Vagina (tissue), 2 donors: ENCODE measurements at regions of chr6 and their contacts with region 1.

Region 1: DNA sequence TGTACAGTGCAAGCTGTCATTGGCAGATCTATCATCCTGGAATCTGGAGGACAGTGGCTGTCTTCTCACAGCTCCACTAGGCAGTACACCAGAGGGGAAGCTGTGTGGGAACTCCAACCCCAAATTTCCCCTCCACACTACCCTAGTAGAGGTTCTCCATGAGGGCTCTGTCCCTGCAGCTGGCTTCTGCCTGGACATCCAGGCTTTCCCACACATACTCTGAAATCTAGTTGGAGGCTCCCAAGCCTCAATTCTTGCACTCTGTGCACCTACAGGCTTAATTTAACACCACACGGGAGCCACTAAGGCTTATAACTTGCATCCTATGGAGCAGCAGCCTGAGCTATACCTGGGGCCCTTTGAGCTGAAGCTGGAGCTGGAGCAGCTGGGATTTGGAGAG is 43.0 kb upstream of the TRIM39 start:
- DNase-seq: no peak
- H3K4me3 ChIP-seq: no peak overlapping the region
- H3K27ac ChIP-seq: no peak overlapping the region
- H3K4me1 ChIP-seq: no peaks in the 10 kb centered on the region
- H3K27me3 ChIP-seq: no peaks in the 10 kb centered on the region
- CTCF ChIP-seq: no peak
- POLR2A ChIP-seq: no peak

Region 2: DNA sequence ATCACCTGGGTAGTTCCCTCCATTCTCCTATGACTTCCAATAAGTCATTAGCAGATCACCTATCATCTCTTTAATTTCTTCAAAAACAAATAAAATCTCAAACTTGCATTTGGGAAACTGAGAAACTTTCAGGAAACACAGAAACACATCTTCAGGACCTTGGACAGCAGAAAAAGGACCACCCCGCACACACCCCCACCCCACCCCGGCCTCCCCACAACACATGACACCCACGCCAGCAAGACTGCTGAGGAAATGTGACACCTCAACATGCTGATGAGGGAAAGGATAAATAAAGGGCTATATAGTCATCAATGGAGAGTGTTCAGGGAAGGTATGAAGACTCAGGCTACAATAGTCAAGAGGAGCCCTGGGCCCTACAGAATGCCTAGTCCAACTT is 27.3 kb after region 1 on chr6:
- intact Hi-C with region 1: loop called (anchors 1 kb)
- DNase-seq: no peak
- H3K4me3 ChIP-seq: no peak overlapping the region
- H3K27ac ChIP-seq: no peak overlapping the region
- H3K4me1 ChIP-seq: no peaks in the 10 kb centered on the region
- H3K27me3 ChIP-seq: no peaks in the 10 kb centered on the region
- CTCF ChIP-seq: no peak
- POLR2A ChIP-seq: no peak